Right ventricle myocardium inferior (tissue), 1 donor: ENCODE measurements at regions of chr15 and their contacts with region 1.

Region 1: DNA sequence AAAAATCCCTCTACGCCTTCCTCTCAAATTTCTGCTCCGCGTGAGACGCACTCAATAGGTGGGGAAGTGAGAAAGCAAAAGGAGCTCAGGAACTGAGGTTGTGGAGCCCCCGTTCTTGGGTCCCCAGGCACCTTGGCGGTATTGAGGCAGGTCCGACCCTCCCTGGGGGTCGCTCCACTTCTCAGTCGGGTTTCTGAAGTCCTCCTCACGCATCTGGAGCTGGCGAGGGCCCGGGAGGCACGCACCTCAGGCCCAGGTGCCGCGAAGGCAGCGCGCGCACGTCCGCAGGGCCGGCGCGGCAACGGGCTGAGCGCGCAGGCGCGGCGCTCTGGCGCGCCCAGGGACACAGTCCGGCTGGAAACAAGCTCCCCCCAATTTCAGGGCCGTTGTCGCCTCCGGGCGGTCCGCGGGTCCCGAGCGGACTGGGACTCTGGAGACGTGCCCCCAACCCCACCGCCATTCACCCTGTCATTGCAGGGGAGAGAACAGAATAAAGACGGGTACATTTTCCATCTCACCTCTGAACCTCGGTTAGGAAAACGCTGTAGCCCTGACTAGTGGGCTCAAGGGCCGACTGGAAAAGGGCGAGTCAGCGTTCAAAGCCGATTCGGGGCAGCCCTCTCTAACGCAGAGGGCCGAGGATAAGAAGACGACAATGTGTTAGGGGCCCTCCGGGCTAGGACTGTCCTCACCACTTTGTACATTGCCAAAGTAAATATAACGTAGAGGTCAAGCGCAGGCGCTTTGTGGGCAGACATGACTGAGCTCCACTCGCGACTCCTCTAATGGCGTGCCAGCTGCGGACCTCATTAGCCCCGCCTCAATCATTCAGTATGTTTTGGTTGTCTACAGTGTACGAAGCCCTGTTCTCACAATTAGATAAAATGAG is at the start of gene ZNF770:
- DNase-seq: peak; percentile 91
- ATAC-seq: peak; percentile 95
- total RNA-seq, gene ZNF770: 45.3 TPM

Region 2: GRCh38 chr15:34209421-34210282 is 778.6 kb before region 1 on chr15 and contains the start of gene KATNBL1:
- intact Hi-C with region 1: loop called (anchors 10 kb)
- DNase-seq: peak; percentile 98
- ATAC-seq: peak; percentile 100
- total RNA-seq, gene KATNBL1: 19.3 TPM

Region 3: DNA sequence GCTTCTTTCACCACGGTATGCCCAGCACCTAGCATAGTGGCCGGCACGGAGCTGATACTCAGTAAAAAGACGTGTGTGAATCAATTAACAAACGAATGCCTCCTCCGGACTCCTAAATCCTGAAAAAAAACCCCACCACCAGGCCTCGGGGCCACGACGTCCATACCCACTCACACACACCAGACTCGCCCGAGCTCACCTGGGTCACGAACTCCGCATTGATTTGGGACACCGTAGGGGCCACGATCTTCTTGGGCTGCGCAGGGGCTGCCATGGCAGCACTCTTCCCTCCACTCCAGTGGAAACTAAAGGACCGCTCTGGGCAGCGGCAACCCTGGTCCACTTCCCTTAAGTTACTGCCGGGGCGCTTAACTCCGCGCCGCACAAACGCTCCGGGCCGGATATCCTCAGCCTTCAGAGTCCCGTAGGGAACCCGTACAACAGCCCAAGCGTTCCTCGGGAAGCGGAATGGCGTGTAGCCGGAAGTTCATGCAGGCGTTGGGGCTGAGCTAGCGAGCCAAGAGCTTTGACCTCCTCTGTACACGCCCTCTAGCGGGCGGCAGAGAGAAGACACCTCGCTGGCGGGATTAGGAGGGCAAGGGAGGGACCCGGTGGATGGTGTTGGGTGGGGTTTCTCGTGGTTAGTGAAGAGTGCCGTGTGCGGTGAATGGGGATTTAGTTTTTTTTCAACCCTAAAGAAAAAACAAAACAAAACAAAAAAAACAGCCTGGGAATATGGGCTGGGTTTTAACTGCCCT is 18.7 kb before region 1 on chr15 and contains the start of gene AQR:
- intact Hi-C with region 1: loop called (anchors 1 kb)
- DNase-seq: peak; percentile 97
- ATAC-seq: peak; percentile 100
- total RNA-seq, gene AQR: 10.1 TPM

Region 4: GRCh38 chr15:35194296-35194695 is 206.1 kb after region 1 on chr15:
- intact Hi-C with region 1: no loop called
- DNase-seq: no peak
- ATAC-seq: no peak

Region 5: GRCh38 chr15:35329521-35329961 is 341.3 kb after region 1 on chr15:
- intact Hi-C with region 1: no loop called
- DNase-seq: no peak
- ATAC-seq: no peak